ENCODE measurements at regions of chr3 and their contacts with region 1.

Region 1: GRCh38 chr3:138417559-138417982 is 16.8 kb upstream of the ESYT3 start:
- DNase-seq: peak; percentile 80
- ATAC-seq: peak; percentile 93
- H3K4me3 ChIP-seq: no peak overlapping the region
- H3K27ac ChIP-seq: no peak overlapping the region
- H3K4me1 ChIP-seq: peaks cover 8% of the 10 kb centered on the region
- H3K27me3 ChIP-seq: peaks cover 4% of the 10 kb centered on the region; the same call in 1 of the 2 replicates
- CTCF ChIP-seq: peak; percentile 92
- POLR2A ChIP-seq: no peak
- RAD21 ChIP-seq: peak; percentile 84

Region 2: DNA sequence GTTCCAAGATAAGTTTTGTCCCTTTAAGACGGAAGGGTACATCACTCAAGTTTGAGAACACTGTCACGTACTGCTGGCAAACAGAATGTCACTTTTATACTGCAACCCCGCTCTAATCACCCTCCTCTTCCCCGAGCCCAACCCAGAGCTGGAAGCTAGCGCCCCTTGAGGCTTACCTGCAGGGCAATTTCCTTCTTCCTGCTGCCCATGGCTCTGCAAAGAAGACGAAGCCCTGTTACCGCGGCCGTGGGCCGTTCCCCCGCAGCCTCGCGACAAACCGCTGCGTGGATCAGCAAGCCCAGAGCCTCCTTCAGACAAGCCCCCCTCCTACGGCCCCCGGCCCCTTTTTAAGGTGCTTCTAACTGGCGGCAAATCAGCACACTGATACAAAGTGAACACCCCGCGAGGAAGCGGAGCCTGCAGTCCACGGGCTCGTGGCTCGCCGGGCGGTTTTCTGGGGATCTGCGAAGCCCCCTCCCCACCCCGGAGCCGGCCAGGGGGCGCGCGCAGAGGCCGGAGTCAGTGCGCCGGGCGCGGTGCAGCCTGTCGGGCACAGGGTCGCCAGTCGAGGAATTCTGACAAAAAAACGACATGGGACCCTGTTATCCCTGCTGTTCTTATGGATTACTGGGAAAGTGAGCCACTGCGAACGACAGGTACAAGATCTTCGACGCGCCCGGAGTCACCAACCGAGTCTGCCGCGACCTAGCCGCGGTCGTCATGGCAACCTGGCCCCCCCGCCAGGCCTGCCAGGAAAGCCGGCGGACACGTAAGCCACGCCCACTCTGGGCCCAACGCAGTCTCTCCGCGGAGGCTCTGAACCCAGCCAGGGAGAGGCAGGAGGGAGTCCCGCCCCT is 88.2 kb before region 1 on chr3 and contains the start of gene NME9:
- CTCF ChIA-PET with region 1: no interaction called
- POLR2A ChIA-PET with region 1: no interaction called
- dilution Hi-C with region 1: no loop called
- in situ Hi-C with region 1: loop called (anchors 5 kb)
- intact Hi-C with region 1: loop called (anchors 2 kb)
- DNase-seq: peak; percentile 73
- ATAC-seq: peak; percentile 97
- H3K4me3 ChIP-seq: peak within 1 kb of the TSS; percentile 62
- H3K27ac ChIP-seq: no peak within 1 kb of the TSS
- H3K4me1 ChIP-seq: no peaks in the 10 kb centered on the region
- H3K27me3 ChIP-seq: peaks cover under 1% of the 10 kb centered on the region
- CTCF ChIP-seq: peak; percentile 50
- POLR2A ChIP-seq: no peak
- RAD21 ChIP-seq: peak; percentile 36
- total RNA-seq, gene NME9: not detected in 2 replicates

Region 3: DNA sequence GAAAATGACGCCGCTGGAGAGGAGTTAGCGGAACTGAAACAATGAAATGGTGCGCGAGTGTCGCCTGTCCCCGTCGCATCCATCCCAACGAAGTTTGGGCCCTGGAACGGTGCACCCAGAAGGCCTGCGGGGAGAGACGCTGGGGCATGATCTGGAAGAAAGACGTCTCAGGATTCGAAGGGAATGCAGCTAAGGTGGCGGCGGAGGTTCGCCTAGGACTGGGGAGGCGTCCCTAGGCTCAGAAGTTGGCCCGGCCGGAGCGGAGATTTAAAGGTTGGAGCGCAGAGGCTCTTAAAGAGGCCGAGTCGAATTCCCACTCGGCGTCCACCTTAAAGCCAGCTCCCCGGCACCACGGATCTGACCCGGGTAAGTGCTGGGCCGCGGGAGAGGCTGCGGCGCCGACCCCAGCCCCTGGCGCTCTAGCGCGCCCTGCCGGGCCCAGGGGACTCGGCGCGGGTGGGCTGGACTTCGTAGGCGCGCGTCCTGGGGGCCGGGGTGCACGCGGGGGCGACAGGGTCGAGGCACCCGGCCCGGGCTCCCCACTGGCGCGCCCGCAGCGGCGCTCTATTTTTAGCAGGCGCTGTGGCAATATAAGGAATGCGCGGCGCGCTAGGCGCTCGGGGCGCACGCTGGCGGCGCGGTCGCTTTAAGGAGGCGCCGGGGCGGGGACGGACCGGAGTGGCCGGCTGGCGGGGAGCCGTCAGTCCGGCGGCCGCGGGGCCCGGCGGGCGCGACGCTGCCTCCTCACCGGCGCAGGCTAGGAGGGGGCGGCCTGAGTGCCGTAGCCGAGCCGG is 69.4 kb before region 1 on chr3 and contains the start of gene MRAS:
- CTCF ChIA-PET with region 1: interaction called, 4 read pairs
- POLR2A ChIA-PET with region 1: no interaction called
- dilution Hi-C with region 1: no loop called
- in situ Hi-C with region 1: no loop called
- intact Hi-C with region 1: loop called (anchors 5 kb)
- DNase-seq: peak; percentile 73
- ATAC-seq: peak; percentile 78
- H3K4me3 ChIP-seq: peak within 1 kb of the TSS; percentile 84
- H3K27ac ChIP-seq: peak within 1 kb of the TSS; percentile 70
- H3K4me1 ChIP-seq: peaks cover 10% of the 10 kb centered on the region
- H3K27me3 ChIP-seq: no peaks in the 10 kb centered on the region
- CTCF ChIP-seq: peak; percentile 50
- POLR2A ChIP-seq: peak; percentile 79
- RAD21 ChIP-seq: peak; percentile 38
- total RNA-seq, gene MRAS: 56.1 and 59.3 TPM in 2 replicates

Region 4: DNA sequence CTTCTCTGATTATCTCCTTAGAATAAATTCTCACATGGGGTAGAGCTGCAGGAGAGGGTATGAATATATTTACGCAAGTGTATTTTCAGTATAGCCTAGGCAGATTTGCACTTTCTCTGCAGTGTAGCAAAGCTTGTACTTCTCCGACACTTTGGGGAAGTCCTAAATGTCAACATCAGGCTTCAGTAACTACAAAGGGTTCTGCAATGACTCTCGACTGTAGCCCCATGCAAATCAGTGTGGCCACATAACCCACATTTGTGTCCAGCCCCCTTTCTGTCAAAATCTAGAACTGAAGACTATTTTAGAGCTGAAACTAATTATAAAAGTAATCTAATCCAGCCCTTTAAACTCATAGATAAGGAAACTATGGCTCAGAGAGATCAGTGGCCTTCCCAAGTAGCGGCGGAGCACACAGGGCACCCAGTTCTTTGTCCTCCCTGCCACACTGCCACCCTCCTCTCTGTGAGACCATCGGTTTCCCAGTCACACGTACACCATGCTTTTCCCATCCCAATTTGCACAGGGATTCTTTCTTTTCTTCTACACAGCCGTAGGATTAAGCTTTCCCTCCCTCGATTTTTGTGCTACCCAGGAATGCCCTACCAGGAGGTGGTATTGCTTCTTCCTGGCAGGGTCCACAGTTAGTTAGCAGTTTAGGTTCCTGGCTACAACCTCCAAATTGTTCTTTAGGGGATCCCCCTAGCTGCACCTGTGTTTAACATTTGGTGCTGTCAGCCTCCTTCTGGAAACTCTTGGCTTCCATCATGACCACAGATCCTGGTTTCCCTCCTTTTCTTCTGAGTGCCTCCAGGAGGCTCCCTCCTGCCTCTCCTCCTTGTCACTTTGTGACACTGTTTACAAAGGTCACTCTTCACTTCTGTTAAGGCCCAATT is 46.3 kb before region 1 on chr3:
- CTCF ChIA-PET with region 1: no interaction called
- POLR2A ChIA-PET with region 1: no interaction called
- dilution Hi-C with region 1: no loop called
- in situ Hi-C with region 1: no loop called
- intact Hi-C with region 1: no loop called
- DNase-seq: no peak
- ATAC-seq: no peak
- H3K4me3 ChIP-seq: no peak overlapping the region
- H3K27ac ChIP-seq: no peak overlapping the region
- H3K4me1 ChIP-seq: no peaks in the 10 kb centered on the region
- H3K27me3 ChIP-seq: no peaks in the 10 kb centered on the region
- CTCF ChIP-seq: no peak
- POLR2A ChIP-seq: no peak
- RAD21 ChIP-seq: no peak

Region 5: GRCh38 chr3:138493804-138494606 is 76.4 kb after region 1 on chr3:
- CTCF ChIA-PET with region 1: no interaction called
- POLR2A ChIA-PET with region 1: no interaction called
- dilution Hi-C with region 1: no loop called
- in situ Hi-C with region 1: no loop called
- intact Hi-C with region 1: loop called (anchors 2 kb)
- DNase-seq: peak; percentile 87
- ATAC-seq: peak; percentile 91
- H3K4me3 ChIP-seq: no peak overlapping the region
- H3K27ac ChIP-seq: no peak overlapping the region
- H3K4me1 ChIP-seq: no peaks in the 10 kb centered on the region
- H3K27me3 ChIP-seq: no peaks in the 10 kb centered on the region
- CTCF ChIP-seq: no peak
- POLR2A ChIP-seq: no peak
- RAD21 ChIP-seq: no peak